Activated naive CD4-positive, alpha-beta T cell treated with anti-CD3 and anti-CD28 coated beads for 36 hours (primary cell): ENCODE measurements at regions of chr3 and their contacts with region 1.

Region 1: GRCh38 chr3:122365073-122365472 is 18.0 kb downstream of the MIX23 start:
- DNase-seq: no peak
- H3K4me3 Mint-ChIP-seq: no peak overlapping the region
- H3K27ac Mint-ChIP-seq: peak overlapping the region; percentile 70
- H3K4me1 Mint-ChIP-seq: peaks cover 17% of the 10 kb centered on the region
- H3K27me3 Mint-ChIP-seq: no peaks in the 10 kb centered on the region

Region 2: GRCh38 chr3:122322095-122323075 is 42.7 kb before region 1 on chr3:
- CTCF ChIA-PET with region 1: no interaction called
- intact Hi-C with region 1: loop called (anchors 2 kb)
- DNase-seq: peak; percentile 73
- H3K4me3 Mint-ChIP-seq: no peak overlapping the region
- H3K27ac Mint-ChIP-seq: peak overlapping the region; percentile 77
- H3K4me1 Mint-ChIP-seq: peaks cover 22% of the 10 kb centered on the region
- H3K27me3 Mint-ChIP-seq: no peaks in the 10 kb centered on the region